ENCODE measurements at regions of chr5 and their contacts with region 1.

Region 1: DNA sequence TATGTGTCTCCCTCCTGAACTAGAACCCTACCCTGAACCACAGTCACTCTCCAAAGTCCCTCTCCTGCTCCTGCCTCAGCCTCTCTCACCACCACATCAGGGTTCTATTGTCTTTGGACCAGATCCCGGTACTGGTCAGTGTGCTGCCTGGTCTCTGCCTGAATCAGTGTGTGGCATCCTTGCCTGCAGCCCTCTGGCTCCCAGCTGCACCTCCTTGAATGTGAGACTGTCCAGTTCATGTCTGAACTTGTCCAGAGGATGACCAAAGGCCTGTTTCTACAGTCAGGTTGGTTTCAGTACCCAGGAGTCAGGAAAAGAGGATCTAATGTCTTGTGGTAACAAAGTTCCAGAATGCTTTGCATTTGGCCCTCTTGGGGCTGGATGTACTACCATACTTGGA is 76.8 kb upstream of the RANBP3L start:
- DNase-seq: no peak
- ATAC-seq: no peak
- H3K4me3 ChIP-seq: no peak overlapping the region
- H3K27ac ChIP-seq: no peak overlapping the region
- H3K4me1 ChIP-seq: no peaks in the 10 kb centered on the region
- H3K27me3 ChIP-seq: peaks cover 7 to 11% of the 10 kb centered on the region in 2 experiments; a peak in 3 of 5 replicates
- CTCF ChIP-seq: no peak
- EP300 ChIP-seq: no peak
- POLR2A ChIP-seq: no peak
- RAD21 ChIP-seq: no peak

Region 2: DNA sequence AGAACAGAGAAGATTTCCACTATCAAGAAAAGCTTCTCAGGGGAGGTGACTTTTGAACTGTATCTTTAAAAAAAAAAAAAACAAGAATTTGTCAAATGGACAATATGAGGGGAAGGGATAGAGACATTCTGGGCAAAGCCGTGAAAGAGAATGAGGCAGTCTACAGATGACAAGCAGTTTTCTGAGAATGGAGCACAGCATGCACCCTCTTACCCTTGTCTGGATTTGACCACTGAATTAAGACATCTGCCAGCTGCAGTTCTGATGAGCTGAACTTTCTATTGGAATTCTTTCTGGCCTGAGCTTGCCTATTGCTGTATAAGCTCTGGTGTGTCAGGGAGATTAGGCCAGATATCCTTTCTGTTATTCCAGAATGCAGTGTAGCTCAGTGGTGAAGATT is 66.6 kb before region 1 on chr5:
- CTCF ChIA-PET with region 1: no interaction called
- POLR2A ChIA-PET with region 1: no interaction called
- in situ Hi-C with region 1: no loop called
- intact Hi-C with region 1: no loop called
- DNase-seq: no peak
- ATAC-seq: no peak
- H3K4me3 ChIP-seq: no peak overlapping the region
- H3K27ac ChIP-seq: no peak overlapping the region
- H3K4me1 ChIP-seq: no peaks in the 10 kb centered on the region
- H3K27me3 ChIP-seq: peaks cover 0 to 2% of the 10 kb centered on the region in 2 experiments; a peak in 1 of 5 replicates
- CTCF ChIP-seq: no peak
- EP300 ChIP-seq: no peak
- POLR2A ChIP-seq: no peak
- RAD21 ChIP-seq: no peak

Region 3: DNA sequence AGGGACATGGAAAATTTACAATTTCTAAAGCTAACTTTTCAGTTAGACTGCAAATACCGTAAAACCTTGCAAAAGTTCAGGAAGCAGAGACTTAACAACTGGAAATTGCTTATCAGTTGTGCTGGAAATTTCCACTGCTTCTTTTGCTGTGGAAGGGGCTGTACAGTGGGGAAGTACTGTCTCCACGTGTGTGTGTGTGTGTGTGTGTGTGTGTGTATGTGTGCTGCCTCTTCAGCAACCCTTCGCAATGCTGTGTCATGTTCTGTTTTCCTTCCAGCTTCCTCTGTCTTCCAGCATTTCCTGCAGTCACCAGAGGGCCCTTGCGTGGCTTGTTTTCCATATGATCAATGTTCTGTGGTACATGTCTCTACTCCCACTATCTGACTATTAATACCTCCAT is 10.7 kb after region 1 on chr5:
- CTCF ChIA-PET with region 1: no interaction called
- POLR2A ChIA-PET with region 1: interaction called, 15 read pairs
- in situ Hi-C with region 1: no loop called
- intact Hi-C with region 1: no loop called
- DNase-seq: peak in 2 of 4 experiments; percentile 10 to 53
- ATAC-seq: peak; percentile 74
- H3K4me3 ChIP-seq: no peak overlapping the region
- H3K27ac ChIP-seq: no peak overlapping the region
- H3K4me1 ChIP-seq: no peaks in the 10 kb centered on the region; a peak in 2 of 5 replicates
- H3K27me3 ChIP-seq: no peaks in the 10 kb centered on the region; a peak in 2 of 5 replicates
- CTCF ChIP-seq: no peak; a peak in 1 of 6 replicates
- EP300 ChIP-seq: no peak
- POLR2A ChIP-seq: no peak
- RAD21 ChIP-seq: peak in 1 of 2 experiments; percentile 10; a peak in 2 of 4 replicates

Region 4: DNA sequence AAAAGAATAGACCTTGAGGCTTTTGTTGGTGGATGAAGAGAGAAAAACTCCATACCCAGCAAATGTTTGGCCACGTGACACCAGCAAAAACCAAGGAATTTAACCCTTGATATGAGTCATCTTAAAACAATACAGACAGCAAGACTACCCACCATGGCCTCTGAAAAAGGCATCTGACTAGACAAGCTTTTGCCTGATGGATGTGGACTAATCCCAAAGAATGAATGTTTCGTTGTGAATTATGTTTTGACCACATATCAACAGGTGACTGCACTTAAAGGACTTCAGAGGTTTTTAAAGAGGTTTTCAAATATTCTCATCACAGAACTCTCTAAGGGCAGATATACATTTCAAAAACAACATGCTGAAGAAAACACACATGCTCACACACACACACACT is 194.9 kb after region 1 on chr5:
- CTCF ChIA-PET with region 1: no interaction called
- POLR2A ChIA-PET with region 1: no interaction called
- in situ Hi-C with region 1: no loop called
- intact Hi-C with region 1: no loop called
- DNase-seq: no peak
- ATAC-seq: no peak
- H3K4me3 ChIP-seq: no peak overlapping the region
- H3K27ac ChIP-seq: no peak overlapping the region
- H3K4me1 ChIP-seq: no peaks in the 10 kb centered on the region
- H3K27me3 ChIP-seq: no peaks in the 10 kb centered on the region
- CTCF ChIP-seq: no peak
- EP300 ChIP-seq: no peak
- POLR2A ChIP-seq: no peak
- RAD21 ChIP-seq: no peak

Measured in K562 (cell line).